Adrenal gland (tissue), 19 donors: ENCODE measurements at regions of chr20 and their contacts with region 1.

Region 1: DNA sequence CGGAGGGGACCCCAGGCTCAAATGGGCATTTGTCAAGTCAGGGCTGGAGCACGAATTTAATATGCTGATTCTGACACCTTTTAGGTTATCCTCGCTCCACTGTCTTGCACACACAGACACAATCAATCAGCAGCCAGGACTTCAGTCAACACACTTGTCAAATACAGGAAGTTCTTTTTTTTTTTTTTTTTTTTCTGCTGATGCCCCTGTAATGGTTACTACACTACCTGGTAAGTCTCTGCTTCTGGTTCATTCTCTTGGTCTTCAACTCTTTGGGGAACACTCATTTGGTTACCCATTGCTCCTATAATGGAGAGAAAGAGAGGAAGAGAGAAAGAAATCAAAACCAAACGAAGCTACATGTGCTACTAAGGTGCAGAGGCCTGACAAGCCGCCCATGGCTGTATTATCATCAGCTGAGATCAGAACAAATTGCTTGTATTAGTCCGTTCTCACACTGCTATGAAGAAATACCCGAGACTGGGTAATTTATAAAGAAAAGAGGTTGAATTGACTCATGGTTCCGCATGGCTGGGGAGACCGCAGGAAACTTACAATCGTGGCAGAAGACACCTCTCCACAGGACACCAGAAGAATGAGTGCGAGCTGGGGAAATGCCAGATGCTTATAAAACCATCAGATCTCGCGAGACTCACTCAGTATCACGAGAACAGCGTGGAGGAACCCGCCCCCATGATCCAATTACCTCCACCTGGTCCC is 11.8 kb downstream of the BCAS1 start:
- DNase-seq: no peak
- H3K4me3 ChIP-seq: no peak overlapping the region
- H3K27ac ChIP-seq: no peak overlapping the region
- H3K4me1 ChIP-seq: no peaks in the 10 kb centered on the region
- H3K27me3 ChIP-seq: no peaks in the 10 kb centered on the region
- CTCF ChIP-seq: no peak
- POLR2A ChIP-seq: no peak

Region 2: GRCh38 chr20:53957451-53958172 is 101.0 kb before region 1 on chr20:
- intact Hi-C with region 1: loop called in 1 of 2 experiments (anchors 10 kb)
- DNase-seq: no peak
- H3K4me3 ChIP-seq: no peak overlapping the region
- H3K27ac ChIP-seq: no peak overlapping the region
- H3K4me1 ChIP-seq: peaks cover 0 to 6% of the 10 kb centered on the region in 2 donors
- H3K27me3 ChIP-seq: no peaks in the 10 kb centered on the region
- CTCF ChIP-seq: no peak
- POLR2A ChIP-seq: no peak